Right ventricle myocardium inferior (tissue), 1 donor: ENCODE measurements at regions of chr2 and their contacts with region 1.

Region 1: GRCh38 chr2:207166039-207166348 is 246 bp upstream of the KLF7 start:
- DNase-seq: peak; percentile 99
- ATAC-seq: peak; percentile 93

Region 2: GRCh38 chr2:206981739-206982340 is 184.2 kb before region 1 on chr2:
- intact Hi-C with region 1: loop called (anchors 1 kb)
- DNase-seq: peak; percentile 69
- ATAC-seq: peak; percentile 83

Region 3: GRCh38 chr2:207073801-207074678 is 92.0 kb before region 1 on chr2:
- intact Hi-C with region 1: loop called (anchors 5 kb)
- DNase-seq: peak; percentile 68
- ATAC-seq: peak; percentile 67

Region 4: DNA sequence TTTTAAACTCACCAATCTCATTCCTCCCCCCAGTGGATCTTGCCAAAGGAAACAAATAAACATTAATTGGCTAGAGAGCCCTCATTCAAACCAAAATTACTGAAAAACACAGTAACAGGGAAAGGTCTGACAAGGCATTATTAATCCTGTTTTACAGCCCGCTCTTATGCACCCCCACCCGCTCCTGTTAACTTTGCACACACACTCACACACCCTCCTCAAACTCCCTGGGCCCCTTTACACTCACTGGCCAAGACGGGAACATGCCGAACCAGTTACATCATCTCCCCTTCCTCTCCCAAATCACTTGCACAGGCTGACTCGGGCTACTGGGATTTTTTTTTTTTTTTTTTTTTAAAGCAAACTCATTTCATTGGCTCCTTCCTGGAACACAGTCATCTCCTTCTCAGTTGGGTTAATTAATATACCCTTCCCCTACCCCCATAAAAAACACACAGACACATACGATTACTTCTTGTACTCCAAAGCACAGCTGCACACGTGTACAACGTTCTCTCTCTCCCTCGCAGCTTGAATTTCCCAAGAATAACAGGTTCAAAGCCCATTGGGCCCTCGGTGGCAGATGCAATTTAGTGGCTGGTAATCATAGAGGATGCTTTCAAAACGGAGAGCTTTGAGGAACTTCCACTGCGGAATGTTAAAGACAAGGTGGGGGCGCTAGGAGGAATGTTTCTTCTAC is 32.0 kb before region 1 on chr2:
- intact Hi-C with region 1: loop called (anchors 2 kb)
- DNase-seq: peak; percentile 78
- ATAC-seq: peak; percentile 97

Region 5: GRCh38 chr2:207227062-207227748 is 61.2 kb after region 1 on chr2:
- intact Hi-C with region 1: loop called (anchors 2 kb)
- DNase-seq: no peak
- ATAC-seq: peak; percentile 43

Region 6: DNA sequence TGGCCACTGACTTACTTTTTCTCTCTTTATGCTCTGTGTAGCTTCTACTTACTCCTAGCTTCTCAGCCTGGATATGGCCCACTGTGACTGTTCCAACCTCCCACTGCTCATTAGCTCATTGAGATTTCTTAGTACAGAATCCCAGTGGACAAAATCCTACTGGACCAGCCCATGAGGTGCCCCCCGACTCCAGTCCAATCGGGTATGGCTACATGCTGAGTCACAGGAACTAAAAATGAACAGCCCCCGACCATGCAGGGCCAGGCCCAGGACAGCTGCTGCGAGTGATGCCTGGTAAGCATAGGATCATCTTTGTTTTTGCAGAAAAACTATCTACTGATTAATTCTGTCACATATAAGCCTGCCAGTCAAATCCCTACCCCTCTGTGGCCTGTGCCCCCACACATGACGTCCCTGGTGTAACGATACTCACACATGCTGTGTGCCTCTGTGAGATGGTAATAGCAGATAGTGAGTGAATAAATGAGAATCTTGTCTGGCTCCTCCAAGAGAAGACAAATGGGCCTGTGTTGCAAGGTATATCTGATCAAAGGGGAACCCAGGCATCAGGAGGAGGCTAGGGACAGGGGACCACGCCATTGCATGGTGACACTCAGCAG is 85.7 kb after region 1 on chr2:
- intact Hi-C with region 1: no loop called
- DNase-seq: no peak
- ATAC-seq: peak; percentile 4

Region 7: DNA sequence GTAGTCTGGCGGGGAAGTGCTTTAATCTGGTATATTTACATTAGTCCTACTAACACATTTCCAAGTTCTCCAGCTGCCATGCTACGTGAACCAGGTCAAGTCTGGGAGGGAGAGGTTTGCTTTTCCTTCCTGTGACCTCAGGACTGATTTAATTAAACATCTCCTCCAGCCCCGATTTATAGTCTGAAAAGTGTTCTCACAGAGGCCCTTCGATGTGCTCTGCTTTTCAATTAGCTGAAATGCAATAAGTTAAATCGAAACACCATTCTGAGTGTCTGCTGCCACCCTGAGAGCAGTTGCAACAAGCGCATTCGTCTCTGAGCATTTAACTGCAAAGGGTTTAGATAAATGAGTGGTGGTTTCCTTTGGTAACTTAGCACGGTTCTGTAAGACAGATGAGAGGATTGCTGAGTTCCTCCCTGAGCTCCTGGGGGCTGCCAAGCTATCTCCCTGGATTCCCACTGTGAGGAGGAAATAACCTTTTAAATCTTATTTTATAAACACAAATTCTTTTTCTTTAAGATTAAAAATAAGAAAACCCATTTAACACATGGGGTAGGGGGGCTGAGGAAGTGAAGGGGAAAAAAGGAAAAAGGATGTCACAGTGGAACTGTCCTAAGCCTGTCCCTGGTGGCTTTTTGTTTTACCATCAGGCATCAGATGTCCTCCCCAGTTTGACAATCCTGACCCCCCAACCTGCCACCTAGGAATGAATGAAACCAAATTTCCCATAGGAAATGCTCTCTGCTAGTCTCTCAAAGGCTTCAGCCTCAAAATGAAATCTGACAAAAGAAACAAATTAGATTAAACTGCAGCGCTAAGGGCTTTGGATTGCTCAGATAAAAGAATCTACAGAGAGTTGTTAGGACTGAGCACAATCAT is 307.3 kb after region 1 on chr2:
- intact Hi-C with region 1: loop called (anchors 2 kb)
- DNase-seq: peak; percentile 45
- ATAC-seq: peak; percentile 70

Region 8: DNA sequence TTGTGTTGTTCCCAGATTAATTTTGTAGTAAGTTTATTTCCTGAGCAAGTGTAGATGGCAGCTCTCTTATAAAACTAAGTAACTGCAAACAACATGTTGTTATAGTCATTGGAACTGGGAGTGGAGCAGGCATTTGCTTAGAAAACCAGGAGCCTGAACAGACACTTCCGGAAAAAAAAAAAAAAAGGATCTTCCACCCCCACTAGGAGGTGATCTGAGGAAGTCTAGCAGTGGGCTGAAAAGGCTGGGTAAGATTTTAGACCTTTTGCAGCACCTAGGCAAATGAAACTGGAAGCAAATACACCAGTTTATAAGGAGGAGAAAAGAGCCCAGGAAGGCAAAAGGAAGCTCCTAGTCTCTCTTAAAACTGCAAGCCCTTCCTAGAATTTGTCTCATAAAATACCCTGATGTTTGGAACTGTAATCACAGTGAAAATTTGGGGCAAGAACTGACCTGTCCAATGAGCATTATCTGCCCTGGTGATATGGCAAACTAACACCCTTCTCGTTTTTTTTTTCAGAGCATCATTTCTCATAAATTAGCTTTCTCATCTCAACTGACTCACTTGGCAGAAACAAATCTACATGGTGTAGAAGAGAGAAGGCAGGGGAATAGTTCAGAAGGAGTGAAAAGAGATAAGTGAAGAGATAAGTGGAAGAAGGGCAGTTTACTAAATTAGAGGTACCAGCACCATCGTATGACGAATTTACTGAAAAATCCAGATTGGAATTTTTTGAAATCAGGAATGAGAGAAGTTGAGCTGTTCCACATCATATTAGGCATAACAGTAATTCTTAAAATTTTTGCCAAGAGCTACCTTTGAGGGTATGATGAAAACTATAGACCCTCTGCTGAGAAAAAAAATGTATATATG is 541.2 kb after region 1 on chr2:
- intact Hi-C with region 1: no loop called
- DNase-seq: no peak
- ATAC-seq: no peak

Region 9: GRCh38 chr2:207914716-207915115 is 748.7 kb after region 1 on chr2:
- intact Hi-C with region 1: no loop called
- DNase-seq: no peak
- ATAC-seq: no peak